Left ventricle myocardium inferior (tissue), 1 donor: ENCODE measurements at regions of chr1 and their contacts with region 1.

Region 1: DNA sequence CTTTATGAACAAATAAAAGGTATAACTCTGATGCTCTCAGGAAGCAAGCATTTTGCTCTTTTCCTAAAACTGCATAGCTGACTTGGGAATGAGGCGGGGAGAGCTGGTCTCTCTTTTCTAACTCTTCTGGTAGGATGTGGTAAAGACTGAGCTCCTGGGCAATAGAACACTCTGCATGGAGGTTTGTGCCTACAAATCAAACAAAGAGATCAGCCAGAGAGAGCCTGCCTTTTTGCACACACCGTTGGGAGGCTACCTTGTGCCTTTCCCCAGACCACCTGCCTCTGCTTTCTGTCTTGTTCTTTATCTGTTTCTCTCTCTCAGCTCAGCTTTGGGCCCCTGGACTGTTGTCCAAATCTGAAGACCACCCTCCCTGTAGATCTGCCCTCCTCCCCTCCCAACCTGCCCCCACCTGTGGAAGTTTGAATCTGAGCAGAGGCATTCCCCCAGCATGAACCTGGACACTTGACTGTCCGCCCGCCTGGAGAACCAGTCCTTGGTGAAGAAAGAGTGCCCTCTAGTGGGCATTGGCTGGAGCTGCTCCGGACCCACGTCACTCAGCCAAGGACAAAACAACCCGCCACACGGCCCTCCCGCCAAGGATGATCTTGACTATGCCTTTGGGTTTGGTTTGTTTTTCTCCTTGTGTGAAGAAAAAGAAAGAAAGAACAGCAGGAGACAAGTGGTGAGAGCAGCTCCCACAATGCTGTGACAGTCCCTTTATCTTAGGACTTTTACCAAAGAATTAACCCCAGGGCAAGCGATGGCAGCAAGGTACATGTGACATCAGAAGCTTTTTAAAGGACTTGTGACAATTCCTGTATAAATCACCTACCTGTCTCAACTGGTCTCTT is 228.2 kb downstream of the PBX1 start:
- DNase-seq: peak; percentile 82
- H3K4me3 ChIP-seq: no peak overlapping the region
- H3K27ac ChIP-seq: peak overlapping the region; percentile 81
- H3K4me1 ChIP-seq: peaks cover 80% of the 10 kb centered on the region
- H3K27me3 ChIP-seq: no peaks in the 10 kb centered on the region
- CTCF ChIP-seq: peak; percentile 90

Region 2: GRCh38 chr1:164559342-164560051 is 227.7 kb before region 1 on chr1:
- intact Hi-C with region 1: loop called (anchors 10 kb)
- DNase-seq: peak; percentile 34
- H3K4me3 ChIP-seq: peak overlapping the region; percentile 82
- H3K27ac ChIP-seq: peak overlapping the region; percentile 85
- H3K4me1 ChIP-seq: peaks cover 30% of the 10 kb centered on the region
- H3K27me3 ChIP-seq: no peaks in the 10 kb centered on the region
- CTCF ChIP-seq: no peak